ENCODE measurements at regions of chr4 and their contacts with region 1.

Region 1: GRCh38 chr4:89829470-89830138 is 7.4 kb downstream of the SNCA start:
- DNase-seq: peak; percentile 68
- H3K4me3 Mint-ChIP-seq: peak overlapping the region; percentile 0
- H3K27ac Mint-ChIP-seq: peak overlapping the region; percentile 1
- H3K4me1 Mint-ChIP-seq: peaks cover 14% of the 10 kb centered on the region
- H3K27me3 Mint-ChIP-seq: peaks cover 5% of the 10 kb centered on the region

Region 2: DNA sequence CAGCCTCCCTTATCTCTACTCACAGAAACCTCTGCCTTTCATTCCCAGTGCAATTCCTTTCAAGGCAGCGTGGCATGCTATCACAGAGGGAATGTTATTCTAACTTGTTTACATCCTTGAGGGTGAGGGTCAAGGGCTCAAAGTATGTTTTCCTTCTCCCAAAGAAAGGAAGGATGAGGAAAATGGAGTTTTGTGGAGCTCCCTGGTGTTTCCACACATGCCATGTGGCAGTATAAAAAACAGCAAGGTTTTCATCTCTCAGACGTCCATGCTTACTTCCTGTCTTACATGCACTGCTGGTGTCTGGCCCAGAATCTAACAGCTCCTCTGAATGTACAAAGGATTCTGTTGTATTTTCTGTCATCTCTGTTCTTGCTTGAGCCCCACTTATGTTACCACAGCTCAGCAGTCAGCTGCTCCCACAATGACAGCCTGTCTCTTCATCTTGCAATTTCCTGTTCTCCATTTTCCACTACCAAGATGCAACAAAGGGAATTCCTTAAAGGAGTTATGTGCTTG is 120.6 kb before region 1 on chr4:
- CTCF ChIA-PET with region 1: no interaction called
- POLR2A ChIA-PET with region 1: no interaction called
- intact Hi-C with region 1: no loop called
- DNase-seq: no peak
- H3K4me3 Mint-ChIP-seq: no peak overlapping the region
- H3K27ac Mint-ChIP-seq: no peak overlapping the region
- H3K4me1 Mint-ChIP-seq: no peaks in the 10 kb centered on the region
- H3K27me3 Mint-ChIP-seq: no peaks in the 10 kb centered on the region

Region 3: GRCh38 chr4:89876548-89876947 is 46.9 kb after region 1 on chr4:
- CTCF ChIA-PET with region 1: no interaction called
- POLR2A ChIA-PET with region 1: no interaction called
- intact Hi-C with region 1: loop called (anchors 1 kb)
- DNase-seq: no peak
- H3K4me3 Mint-ChIP-seq: no peak overlapping the region
- H3K27ac Mint-ChIP-seq: no peak overlapping the region
- H3K4me1 Mint-ChIP-seq: peaks cover 5% of the 10 kb centered on the region
- H3K27me3 Mint-ChIP-seq: peaks cover 6% of the 10 kb centered on the region

Region 4: DNA sequence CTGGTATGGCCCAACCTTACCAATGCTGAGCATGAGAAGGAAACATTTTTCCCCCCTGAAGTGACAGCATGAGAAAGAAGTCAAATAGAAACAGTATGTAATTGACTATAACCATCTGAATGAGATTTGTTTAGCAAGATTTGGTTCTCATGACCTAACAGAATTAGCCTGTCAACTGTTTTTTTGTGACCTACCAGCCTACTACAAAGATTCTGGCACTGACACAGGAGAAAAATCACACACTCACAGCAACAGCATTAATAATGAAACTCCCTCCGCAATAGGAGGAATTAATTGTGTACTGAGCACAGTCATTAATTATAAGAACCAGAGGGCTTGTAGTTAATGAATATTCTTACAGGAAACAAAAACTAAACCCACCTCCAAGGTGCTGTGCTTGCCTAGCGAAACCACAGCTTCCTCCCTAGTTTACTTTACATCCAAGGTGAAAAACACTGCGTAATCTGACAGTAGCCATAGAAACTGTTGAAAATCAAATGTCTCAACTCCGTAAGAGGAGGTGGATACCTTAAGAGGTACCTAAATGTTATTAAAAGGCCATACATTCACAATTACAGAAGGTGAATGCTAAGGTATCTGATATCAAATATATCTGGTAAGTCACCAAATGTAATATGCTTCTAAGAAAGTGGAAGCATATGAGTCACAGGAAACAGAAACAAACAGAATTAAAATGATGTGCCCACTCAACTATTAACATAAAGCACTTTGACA is 100.0 kb after region 1 on chr4:
- CTCF ChIA-PET with region 1: no interaction called
- POLR2A ChIA-PET with region 1: no interaction called
- intact Hi-C with region 1: loop called (anchors 1 kb)
- DNase-seq: peak; percentile 10
- H3K4me3 Mint-ChIP-seq: peak overlapping the region; percentile 20
- H3K27ac Mint-ChIP-seq: peak overlapping the region; percentile 2
- H3K4me1 Mint-ChIP-seq: peaks cover 16% of the 10 kb centered on the region
- H3K27me3 Mint-ChIP-seq: no peaks in the 10 kb centered on the region